ENCODE measurements at regions of chr13 and their contacts with region 1.

Region 1: DNA sequence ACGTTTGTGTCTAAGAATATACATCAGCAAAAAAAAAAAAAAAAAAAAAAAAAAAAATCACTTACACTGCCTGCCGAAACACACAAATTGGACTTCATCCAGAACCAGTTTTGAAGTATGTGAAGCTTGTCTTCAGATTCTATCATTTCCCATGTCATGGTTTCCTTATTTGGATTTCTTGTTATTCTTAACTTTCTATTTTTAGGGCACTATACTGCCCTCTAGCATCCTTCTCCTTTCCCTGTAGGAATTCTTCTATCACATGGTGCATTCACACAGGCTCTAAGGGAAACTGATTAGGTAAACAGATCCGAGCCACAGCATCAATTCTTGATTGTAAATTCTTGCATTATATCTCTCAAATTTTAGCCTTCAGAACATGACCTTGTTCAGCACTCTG is 1507.5 kb downstream of the OLFM4 start:
- DNase-seq: no peak
- ATAC-seq: no peak
- H3K4me3 ChIP-seq: no peak overlapping the region
- H3K27ac ChIP-seq: no peak overlapping the region
- H3K4me1 ChIP-seq: no peaks in the 10 kb centered on the region
- H3K27me3 ChIP-seq: no peaks in the 10 kb centered on the region

Region 2: GRCh38 chr13:53782488-53782961 is 753.6 kb before region 1 on chr13:
- intact Hi-C with region 1: loop called in 1 of 4 experiments (anchors 10 kb)
- DNase-seq: no peak
- ATAC-seq: peak; percentile 51
- H3K4me3 ChIP-seq: no peak overlapping the region
- H3K27ac ChIP-seq: no peak overlapping the region
- H3K4me1 ChIP-seq: no peaks in the 10 kb centered on the region
- H3K27me3 ChIP-seq: no peaks in the 10 kb centered on the region

Region 3: GRCh38 chr13:54836273-54836672 is 300.2 kb after region 1 on chr13:
- intact Hi-C with region 1: no loop called
- DNase-seq: no peak
- ATAC-seq: no peak
- H3K4me3 ChIP-seq: no peak overlapping the region
- H3K27ac ChIP-seq: no peak overlapping the region
- H3K4me1 ChIP-seq: no peaks in the 10 kb centered on the region
- H3K27me3 ChIP-seq: no peaks in the 10 kb centered on the region

Region 4: DNA sequence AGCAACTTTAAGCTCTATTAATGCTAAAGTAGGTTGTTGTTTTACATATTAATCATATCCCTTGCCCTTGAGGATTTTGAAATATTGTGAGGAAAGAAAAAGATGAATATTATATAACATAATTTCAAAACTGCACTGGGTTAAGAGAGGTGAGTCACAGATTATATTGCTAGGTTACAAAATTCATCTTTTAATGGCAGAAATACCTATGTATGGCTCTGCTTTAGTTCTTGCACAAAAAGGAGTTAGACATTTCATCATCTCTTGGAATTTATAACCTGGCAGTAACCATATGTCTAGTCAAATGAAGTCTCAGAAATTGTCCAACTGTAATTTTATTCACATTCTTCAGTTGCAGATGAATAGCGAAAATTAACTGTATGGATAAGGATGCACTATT is 533.6 kb after region 1 on chr13:
- intact Hi-C with region 1: no loop called
- DNase-seq: no peak
- ATAC-seq: no peak
- H3K4me3 ChIP-seq: no peak overlapping the region
- H3K27ac ChIP-seq: no peak overlapping the region
- H3K4me1 ChIP-seq: no peaks in the 10 kb centered on the region
- H3K27me3 ChIP-seq: no peaks in the 10 kb centered on the region